ENCODE measurements at regions of chr19 and their contacts with region 1.

Region 1: DNA sequence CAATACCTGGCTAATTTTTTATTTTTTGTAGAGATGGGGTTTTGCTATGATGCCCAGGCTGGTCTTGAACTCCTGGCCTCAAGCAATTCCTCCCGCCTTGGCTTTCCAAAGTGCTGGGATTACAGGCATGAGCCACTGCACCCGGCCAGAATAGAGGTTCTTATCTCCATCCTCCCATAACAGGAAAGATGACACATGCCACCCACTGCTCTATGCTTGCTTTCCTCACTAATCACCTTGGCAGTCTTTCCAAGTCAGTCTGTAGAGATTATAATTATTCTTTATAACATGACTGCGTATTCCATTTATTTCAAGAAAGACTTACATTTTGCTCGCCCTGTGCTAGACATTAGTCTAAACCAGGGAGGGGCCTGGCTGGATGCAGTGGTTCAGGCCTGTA is 6.7 kb downstream of the VAV1 start:
- DNase-seq: no peak
- ATAC-seq: no peak
- H3K4me3 Mint-ChIP-seq: no peak overlapping the region
- H3K27ac Mint-ChIP-seq: no peak overlapping the region
- H3K4me1 Mint-ChIP-seq: peaks cover 53% of the 10 kb centered on the region
- H3K27me3 Mint-ChIP-seq: no peaks in the 10 kb centered on the region

Region 2: DNA sequence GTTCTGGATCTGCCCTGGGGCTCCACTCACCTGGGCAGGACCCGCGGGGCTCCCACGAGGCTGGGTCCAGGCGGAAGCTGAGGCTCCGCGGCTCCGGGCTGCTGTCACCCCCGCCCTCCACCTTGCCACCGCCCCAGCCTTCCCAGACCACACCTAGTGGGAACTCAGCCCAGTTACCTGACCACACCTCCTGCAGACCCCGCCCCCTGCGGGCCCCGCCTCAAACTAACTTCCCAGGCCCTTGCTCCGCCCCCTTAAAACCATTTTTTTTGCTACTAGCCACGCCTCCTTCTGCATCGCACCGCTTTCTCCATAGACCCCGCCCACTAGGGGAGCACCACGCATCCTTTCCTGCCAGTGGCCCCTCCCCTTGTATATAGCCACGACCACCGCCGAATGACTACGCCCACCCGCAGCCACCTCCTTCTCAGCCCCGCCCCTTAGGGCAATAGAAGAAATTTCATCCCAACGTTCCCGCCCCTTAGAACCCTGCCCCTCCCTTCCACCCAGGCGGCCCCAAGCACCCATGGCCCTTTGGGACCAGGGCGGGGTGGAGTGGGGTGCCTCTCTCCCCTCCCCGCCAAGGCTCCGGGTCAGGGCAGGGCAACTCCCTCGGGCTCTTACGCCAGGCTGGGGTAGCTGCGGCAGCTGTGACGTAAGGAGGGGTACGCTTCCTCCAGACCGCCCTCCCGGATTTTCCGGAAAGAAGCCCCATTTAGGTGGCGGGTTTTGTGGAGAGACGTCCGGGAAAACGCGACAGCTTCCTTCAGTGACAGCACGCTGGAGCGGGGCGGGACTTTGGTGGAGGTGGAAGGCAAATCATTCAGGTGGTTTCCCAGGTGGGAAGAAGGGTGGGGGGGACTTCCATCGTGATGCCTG is 11.6 kb before region 1 on chr19 and contains the start of gene SH2D3A:
- CTCF ChIA-PET with region 1: interaction called, 7 read pairs
- POLR2A ChIA-PET with region 1: interaction called, 11 read pairs
- DNase-seq: peak; percentile 97
- ATAC-seq: peak; percentile 79
- H3K4me3 Mint-ChIP-seq: peak within 1 kb of the TSS; percentile 88
- H3K27ac Mint-ChIP-seq: peak within 1 kb of the TSS; percentile 91
- H3K4me1 Mint-ChIP-seq: peaks cover 60% of the 10 kb centered on the region
- H3K27me3 Mint-ChIP-seq: no peaks in the 10 kb centered on the region
- total RNA-seq, gene SH2D3A: 28.2 to 28.5 TPM